HEK293T (cell line): ENCODE measurements at regions of chr20 and their contacts with region 1.

Region 1: GRCh38 chr20:45934586-45935415 is at the start of gene PCIF1:
- DNase-seq: peak; percentile 98

Region 2: GRCh38 chr20:45812157-45813020 is 122.4 kb before region 1 on chr20 and contains the start of gene UBE2C:
- CTCF ChIA-PET with region 1: no interaction called
- POLR2A ChIA-PET with region 1: interaction called, 10 read pairs
- DNase-seq: peak; percentile 97

Region 3: GRCh38 chr20:45880988-45881788 is 53.6 kb before region 1 on chr20 and contains the start of gene ZSWIM1:
- CTCF ChIA-PET with region 1: no interaction called
- POLR2A ChIA-PET with region 1: interaction called, 13 read pairs
- DNase-seq: peak; percentile 99

Region 4: DNA sequence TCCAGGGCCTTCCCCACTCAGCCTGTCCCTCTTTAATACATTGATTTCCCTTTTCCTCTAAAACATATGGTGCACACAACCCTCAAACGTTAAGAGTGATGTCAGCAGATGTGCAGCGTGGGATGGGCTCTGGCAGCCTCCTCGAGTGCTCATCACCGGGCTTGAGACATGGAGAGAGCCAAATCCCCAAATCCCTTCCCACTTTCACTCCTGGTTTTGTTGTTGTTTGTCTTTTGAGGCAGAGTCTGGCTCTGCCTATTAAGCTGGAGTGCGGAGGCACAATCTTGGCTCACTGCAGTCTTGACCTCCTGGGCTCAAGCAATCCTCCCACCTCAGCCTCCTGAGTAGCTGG is 17.0 kb before region 1 on chr20:
- CTCF ChIA-PET with region 1: interaction called, 3 read pairs
- POLR2A ChIA-PET with region 1: interaction called, 19 read pairs
- DNase-seq: no peak

Region 5: GRCh38 chr20:45924391-45925261 is 10.2 kb before region 1 on chr20:
- CTCF ChIA-PET with region 1: interaction called, 3 read pairs
- POLR2A ChIA-PET with region 1: interaction called, 25 read pairs
- DNase-seq: no peak

Region 6: GRCh38 chr20:45971675-45972499 is 37.1 kb after region 1 on chr20 and contains the start of gene ZNF335:
- CTCF ChIA-PET with region 1: interaction called, 5 read pairs
- POLR2A ChIA-PET with region 1: interaction called, 28 read pairs
- DNase-seq: peak; percentile 95